ENCODE measurements at regions of chr6 and their contacts with region 1.

Region 1: GRCh38 chr6:13355043-13355951 is 27.0 kb upstream of the TBC1D7 start:
- DNase-seq: peak; percentile 53
- ATAC-seq: peak; percentile 73
- H3K4me3 Mint-ChIP-seq: peak overlapping the region; percentile 68
- H3K27ac Mint-ChIP-seq: peak overlapping the region; percentile 99
- H3K4me1 Mint-ChIP-seq: peaks cover 48% of the 10 kb centered on the region
- H3K27me3 Mint-ChIP-seq: no peaks in the 10 kb centered on the region

Region 2: GRCh38 chr6:13194852-13195251 is 160.4 kb before region 1 on chr6:
- CTCF ChIA-PET with region 1: no interaction called
- POLR2A ChIA-PET with region 1: no interaction called
- intact Hi-C with region 1: no loop called
- DNase-seq: peak; percentile 32
- ATAC-seq: peak; percentile 33
- H3K4me3 Mint-ChIP-seq: no peak overlapping the region
- H3K27ac Mint-ChIP-seq: no peak overlapping the region
- H3K4me1 Mint-ChIP-seq: no peaks in the 10 kb centered on the region
- H3K27me3 Mint-ChIP-seq: peaks cover 9% of the 10 kb centered on the region

Region 3: GRCh38 chr6:13328076-13328874 is 27.0 kb before region 1 on chr6 and contains the start of gene TBC1D7:
- CTCF ChIA-PET with region 1: interaction called, 10 read pairs
- POLR2A ChIA-PET with region 1: interaction called, 4 read pairs
- intact Hi-C with region 1: loop called in 1 of 2 experiments (anchors 1 kb)
- DNase-seq: peak; percentile 96
- ATAC-seq: peak; percentile 91
- H3K4me3 Mint-ChIP-seq: peak within 1 kb of the TSS; percentile 88
- H3K27ac Mint-ChIP-seq: peak within 1 kb of the TSS; percentile 95
- H3K4me1 Mint-ChIP-seq: peaks cover 17% of the 10 kb centered on the region
- H3K27me3 Mint-ChIP-seq: no peaks in the 10 kb centered on the region
- total RNA-seq, gene TBC1D7: 13.8 to 16.4 TPM

Region 4: GRCh38 chr6:13375360-13375878 is 20.1 kb after region 1 on chr6:
- CTCF ChIA-PET with region 1: interaction called, 4 read pairs
- POLR2A ChIA-PET with region 1: interaction called, 4 read pairs
- intact Hi-C with region 1: loop called (anchors 1 to 2 kb)
- DNase-seq: peak; percentile 73
- ATAC-seq: peak; percentile 92
- H3K4me3 Mint-ChIP-seq: no peak overlapping the region
- H3K27ac Mint-ChIP-seq: peak overlapping the region; percentile 51
- H3K4me1 Mint-ChIP-seq: peaks cover 19% of the 10 kb centered on the region
- H3K27me3 Mint-ChIP-seq: peaks cover 1% of the 10 kb centered on the region

Region 5: GRCh38 chr6:13454286-13455221 is 99.3 kb after region 1 on chr6:
- CTCF ChIA-PET with region 1: interaction called, 6 read pairs
- POLR2A ChIA-PET with region 1: interaction called, 16 read pairs
- intact Hi-C with region 1: loop called (anchors 1 kb)
- DNase-seq: peak; percentile 88
- ATAC-seq: peak; percentile 66
- H3K4me3 Mint-ChIP-seq: peak overlapping the region; percentile 36
- H3K27ac Mint-ChIP-seq: peak overlapping the region; percentile 95
- H3K4me1 Mint-ChIP-seq: peaks cover 63% of the 10 kb centered on the region
- H3K27me3 Mint-ChIP-seq: no peaks in the 10 kb centered on the region

Region 6: GRCh38 chr6:13614926-13615798 is 259.9 kb after region 1 on chr6 and contains the start of gene NOL7:
- CTCF ChIA-PET with region 1: interaction called, 8 read pairs
- POLR2A ChIA-PET with region 1: no interaction called
- intact Hi-C with region 1: loop called in 1 of 2 experiments (anchors 1 kb)
- DNase-seq: peak; percentile 99
- ATAC-seq: peak; percentile 92
- H3K4me3 Mint-ChIP-seq: peak within 1 kb of the TSS; percentile 92
- H3K27ac Mint-ChIP-seq: peak within 1 kb of the TSS; percentile 90
- H3K4me1 Mint-ChIP-seq: peaks cover 44% of the 10 kb centered on the region
- H3K27me3 Mint-ChIP-seq: no peaks in the 10 kb centered on the region
- total RNA-seq, gene NOL7: 92.8 to 97.3 TPM

Region 7: GRCh38 chr6:13787137-13787536 is 431.8 kb after region 1 on chr6:
- CTCF ChIA-PET with region 1: no interaction called
- POLR2A ChIA-PET with region 1: no interaction called
- intact Hi-C with region 1: loop called in 1 of 2 experiments (anchors 1 kb)
- DNase-seq: peak; percentile 61
- ATAC-seq: peak; percentile 73
- H3K4me3 Mint-ChIP-seq: peak overlapping the region; percentile 7
- H3K27ac Mint-ChIP-seq: peak overlapping the region; percentile 88
- H3K4me1 Mint-ChIP-seq: peaks cover 37% of the 10 kb centered on the region
- H3K27me3 Mint-ChIP-seq: no peaks in the 10 kb centered on the region